Transverse colon (tissue), 4 donors: ENCODE measurements at regions of chr1 and their contacts with region 1.

Region 1: DNA sequence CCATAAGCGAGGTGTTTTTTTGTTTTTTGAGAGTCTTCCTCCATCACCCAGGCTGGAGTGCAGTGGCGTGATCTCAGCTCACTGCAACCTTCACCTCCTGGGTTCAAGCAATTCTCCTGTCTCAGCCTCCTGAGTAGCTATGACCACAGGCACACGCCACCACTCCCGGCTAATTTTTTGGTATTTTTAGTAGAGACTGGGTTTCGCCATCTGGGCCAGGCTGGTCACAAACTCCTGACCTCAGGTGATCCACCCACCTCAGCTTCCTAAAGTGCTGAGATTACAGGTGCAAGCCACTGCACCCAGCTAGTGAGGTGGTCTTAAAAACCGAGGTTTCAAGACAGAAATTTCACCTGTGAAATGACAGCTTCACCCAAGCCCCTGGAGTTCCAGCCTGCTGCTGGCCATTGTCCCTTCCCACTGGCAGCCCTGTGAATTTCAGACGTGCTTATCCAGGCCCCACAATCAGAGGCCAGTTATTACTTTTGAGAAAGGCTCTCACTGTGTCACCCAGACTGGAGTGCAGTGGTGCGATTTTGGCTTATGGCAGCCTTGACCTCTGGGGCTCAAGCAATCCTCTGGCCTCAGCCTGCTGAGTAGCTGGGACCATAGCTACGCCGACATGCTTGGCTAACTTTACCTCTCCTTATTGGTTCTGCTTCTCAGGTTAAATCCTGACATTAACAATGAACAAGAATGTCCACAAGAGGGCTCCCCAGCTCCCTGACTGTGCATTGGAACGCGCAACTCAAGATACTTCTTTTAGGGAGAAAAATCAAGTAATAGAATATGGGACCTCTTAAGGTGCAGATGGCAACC is 19.4 kb downstream of the ENO1 start:
- DNase-seq: no peak
- H3K4me3 ChIP-seq: no peak overlapping the region
- H3K27ac ChIP-seq: peak overlapping the region in 2 of 4 donors; percentile 17 to 42
- H3K4me1 ChIP-seq: peaks cover 0 to 20% (median 11%) of the 10 kb centered on the region in 4 donors
- H3K27me3 ChIP-seq: no peaks in the 10 kb centered on the region
- CTCF ChIP-seq: peak; percentile 53 to 63 (median 59)
- EP300 ChIP-seq: no peak
- POLR2A ChIP-seq: no peak

Region 2: GRCh38 chr1:7975212-7975865 is 883.8 kb before region 1 on chr1:
- in situ Hi-C with region 1: loop called in 1 of 4 experiments (anchors 25 kb)
- intact Hi-C with region 1: no loop called
- DNase-seq: peak; percentile 80
- H3K4me3 ChIP-seq: no peak overlapping the region
- H3K27ac ChIP-seq: no peak overlapping the region
- H3K4me1 ChIP-seq: peaks cover 0 to 5% (median 0%) of the 10 kb centered on the region in 4 donors
- H3K27me3 ChIP-seq: no peaks in the 10 kb centered on the region
- CTCF ChIP-seq: peak; percentile 74 to 90 (median 87)
- EP300 ChIP-seq: no peak
- POLR2A ChIP-seq: no peak

Region 3: DNA sequence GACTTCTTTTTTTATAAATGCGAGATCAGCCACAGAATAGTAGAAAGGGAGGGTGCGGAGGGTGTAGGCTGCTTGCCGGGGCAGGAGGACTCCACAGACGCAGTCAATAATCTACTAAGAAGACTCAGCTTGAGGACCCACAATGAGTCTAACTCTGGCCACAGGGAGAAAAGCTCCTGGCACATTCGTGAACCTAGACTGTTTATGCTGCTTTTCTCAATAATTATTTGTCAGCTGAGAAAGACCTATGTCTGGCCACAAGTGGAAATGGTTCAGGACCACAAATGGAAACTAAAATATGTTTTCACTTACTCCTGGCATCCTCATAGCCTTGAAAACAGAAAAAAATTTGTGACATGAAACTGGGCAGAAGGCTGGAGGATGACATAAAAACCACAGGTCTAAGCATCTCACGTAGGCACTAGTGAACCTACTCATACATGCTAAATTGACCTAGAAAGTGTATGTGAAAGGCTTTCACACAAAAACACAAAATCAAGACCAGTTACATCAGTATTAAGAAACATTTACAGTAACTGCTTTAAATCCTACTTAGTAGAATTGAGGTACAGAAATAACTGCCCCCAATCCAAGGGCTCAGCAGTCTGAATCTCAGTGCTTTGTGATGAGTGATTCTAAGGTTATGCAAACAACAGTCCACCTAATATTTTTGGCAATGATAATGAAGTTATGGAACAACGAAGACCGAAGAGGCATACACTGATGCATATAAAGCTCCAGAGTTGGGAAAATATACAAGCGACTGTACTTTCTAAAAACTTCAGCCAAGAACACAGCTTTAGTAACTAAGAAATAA is 381.7 kb before region 1 on chr1:
- in situ Hi-C with region 1: no loop called
- intact Hi-C with region 1: no loop called
- DNase-seq: no peak
- H3K4me3 ChIP-seq: no peak overlapping the region
- H3K27ac ChIP-seq: peak overlapping the region; percentile 28 to 45 (median 28)
- H3K4me1 ChIP-seq: peaks cover 6 to 40% (median 14%) of the 10 kb centered on the region in 4 donors
- H3K27me3 ChIP-seq: no peaks in the 10 kb centered on the region
- CTCF ChIP-seq: no peak
- EP300 ChIP-seq: no peak
- POLR2A ChIP-seq: no peak

Region 4: GRCh38 chr1:8554956-8555534 is 304.1 kb before region 1 on chr1:
- in situ Hi-C with region 1: loop called in 2 of 4 experiments (anchors 10 kb)
- intact Hi-C with region 1: loop called (anchors 5 kb)
- DNase-seq: no peak
- H3K4me3 ChIP-seq: no peak overlapping the region
- H3K27ac ChIP-seq: no peak overlapping the region
- H3K4me1 ChIP-seq: peaks cover 0 to 19% (median 1%) of the 10 kb centered on the region in 4 donors
- H3K27me3 ChIP-seq: no peaks in the 10 kb centered on the region
- CTCF ChIP-seq: no peak
- EP300 ChIP-seq: no peak
- POLR2A ChIP-seq: no peak